GM12878 (cell line): ENCODE measurements at regions of chr20 and their contacts with region 1.

Region 1: GRCh38 chr20:833450-834150 is at the start of gene FAM110A:
- DNase-seq: peak; percentile 75
- ATAC-seq: peak; percentile 96
- H3K4me3 ChIP-seq: peak within 1 kb of the TSS; percentile 79
- H3K27ac ChIP-seq: peak within 1 kb of the TSS; percentile 93
- H3K4me1 ChIP-seq: peaks cover 16% of the 10 kb centered on the region
- H3K27me3 ChIP-seq: no peaks in the 10 kb centered on the region
- CTCF ChIP-seq: no peak
- EP300 ChIP-seq: 0 out of 4 replicates have a peak, but pooled peaks of 1 of the 2 experiments have one; percentile 10
- POLR2A ChIP-seq: peak; percentile 81
- RAD21 ChIP-seq: no peak
- polyA plus RNA-seq, gene FAM110A: 1.1 to 2.4 TPM

Region 2: GRCh38 chr20:844473-845225 is 11.0 kb after region 1 on chr20:
- CTCF ChIA-PET with region 1: interaction called, 3 read pairs
- POLR2A ChIA-PET with region 1: interaction called, 13 read pairs
- RAD21 ChIA-PET with region 1: interaction called, 16 read pairs
- SMC1A ChIA-PET with region 1: no interaction called
- in situ Hi-C with region 1: no loop called
- intact Hi-C with region 1: no loop called
- DNase-seq: peak; percentile 45
- ATAC-seq: peak; percentile 98
- H3K4me3 ChIP-seq: peak overlapping the region; percentile 68
- H3K27ac ChIP-seq: no peak overlapping the region; the same call in 1 of the 2 replicates
- H3K4me1 ChIP-seq: peaks cover 36% of the 10 kb centered on the region
- H3K27me3 ChIP-seq: no peaks in the 10 kb centered on the region
- CTCF ChIP-seq: no peak
- EP300 ChIP-seq: no peak
- POLR2A ChIP-seq: no peak; the same call in 1 of the 2 replicates
- RAD21 ChIP-seq: no peak

Region 3: DNA sequence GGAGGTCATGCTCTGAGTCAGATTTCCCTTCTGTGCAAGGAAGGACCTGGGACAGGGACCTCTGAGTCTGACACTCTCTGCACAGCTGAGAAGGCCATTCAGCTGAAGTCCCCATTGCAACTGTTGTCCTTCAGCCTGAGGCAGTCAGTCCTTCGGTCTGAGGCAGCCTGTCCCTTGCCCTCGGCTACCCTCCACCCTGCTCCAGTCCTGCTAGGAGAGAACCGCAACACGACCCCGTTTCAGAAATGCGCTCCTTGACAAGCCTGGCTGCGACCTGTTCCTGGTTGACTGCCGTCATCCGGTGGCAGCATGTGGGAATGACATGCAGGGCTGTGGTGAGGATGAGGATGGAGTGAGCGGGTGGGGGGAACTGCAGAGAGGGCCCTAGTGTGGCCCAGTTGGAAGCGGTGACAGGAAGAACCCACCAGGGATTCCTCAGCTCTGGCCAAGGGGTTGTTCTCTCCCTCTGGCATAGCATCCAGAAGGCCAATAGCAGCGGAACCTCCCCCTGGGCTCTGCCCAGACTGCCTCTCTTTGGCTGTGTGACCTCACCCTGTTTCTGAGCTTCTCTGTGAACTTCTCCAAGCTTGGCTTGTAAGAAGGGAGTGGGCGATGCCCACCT is 122.8 kb after region 1 on chr20:
- CTCF ChIA-PET with region 1: interaction called, 27 read pairs
- POLR2A ChIA-PET with region 1: no interaction called
- RAD21 ChIA-PET with region 1: interaction called, 8 read pairs
- SMC1A ChIA-PET with region 1: interaction called, 18 read pairs
- in situ Hi-C with region 1: no loop called
- intact Hi-C with region 1: no loop called
- DNase-seq: peak; percentile 12
- ATAC-seq: peak; percentile 96
- H3K4me3 ChIP-seq: no peak overlapping the region
- H3K27ac ChIP-seq: no peak overlapping the region
- H3K4me1 ChIP-seq: no peaks in the 10 kb centered on the region
- H3K27me3 ChIP-seq: no peaks in the 10 kb centered on the region; a peak in 1 of 4 replicates
- CTCF ChIP-seq: peak; percentile 97 to 99 (median 98)
- EP300 ChIP-seq: no peak
- POLR2A ChIP-seq: no peak
- RAD21 ChIP-seq: peak; percentile 100

Region 4: GRCh38 chr20:1118336-1119127 is 284.9 kb after region 1 on chr20 and contains the start of gene PSMF1:
- CTCF ChIA-PET with region 1: no interaction called
- POLR2A ChIA-PET with region 1: interaction called, 3 read pairs
- RAD21 ChIA-PET with region 1: no interaction called
- SMC1A ChIA-PET with region 1: no interaction called
- in situ Hi-C with region 1: loop called (anchors 5 kb)
- intact Hi-C with region 1: no loop called
- DNase-seq: peak; percentile 66
- ATAC-seq: peak; percentile 96
- H3K4me3 ChIP-seq: peak within 1 kb of the TSS; percentile 97
- H3K27ac ChIP-seq: peak within 1 kb of the TSS; percentile 64
- H3K4me1 ChIP-seq: peaks cover 18% of the 10 kb centered on the region
- H3K27me3 ChIP-seq: no peaks in the 10 kb centered on the region
- CTCF ChIP-seq: peak in 1 of 3 experiments; percentile 6; a peak in 1 of 6 replicates
- EP300 ChIP-seq: no peak
- POLR2A ChIP-seq: peak; percentile 93
- RAD21 ChIP-seq: no peak
- polyA plus RNA-seq, gene PSMF1: 14.2 to 14.4 TPM